ENCODE measurements at regions of chrX and their contacts with region 1.

Region 1: DNA sequence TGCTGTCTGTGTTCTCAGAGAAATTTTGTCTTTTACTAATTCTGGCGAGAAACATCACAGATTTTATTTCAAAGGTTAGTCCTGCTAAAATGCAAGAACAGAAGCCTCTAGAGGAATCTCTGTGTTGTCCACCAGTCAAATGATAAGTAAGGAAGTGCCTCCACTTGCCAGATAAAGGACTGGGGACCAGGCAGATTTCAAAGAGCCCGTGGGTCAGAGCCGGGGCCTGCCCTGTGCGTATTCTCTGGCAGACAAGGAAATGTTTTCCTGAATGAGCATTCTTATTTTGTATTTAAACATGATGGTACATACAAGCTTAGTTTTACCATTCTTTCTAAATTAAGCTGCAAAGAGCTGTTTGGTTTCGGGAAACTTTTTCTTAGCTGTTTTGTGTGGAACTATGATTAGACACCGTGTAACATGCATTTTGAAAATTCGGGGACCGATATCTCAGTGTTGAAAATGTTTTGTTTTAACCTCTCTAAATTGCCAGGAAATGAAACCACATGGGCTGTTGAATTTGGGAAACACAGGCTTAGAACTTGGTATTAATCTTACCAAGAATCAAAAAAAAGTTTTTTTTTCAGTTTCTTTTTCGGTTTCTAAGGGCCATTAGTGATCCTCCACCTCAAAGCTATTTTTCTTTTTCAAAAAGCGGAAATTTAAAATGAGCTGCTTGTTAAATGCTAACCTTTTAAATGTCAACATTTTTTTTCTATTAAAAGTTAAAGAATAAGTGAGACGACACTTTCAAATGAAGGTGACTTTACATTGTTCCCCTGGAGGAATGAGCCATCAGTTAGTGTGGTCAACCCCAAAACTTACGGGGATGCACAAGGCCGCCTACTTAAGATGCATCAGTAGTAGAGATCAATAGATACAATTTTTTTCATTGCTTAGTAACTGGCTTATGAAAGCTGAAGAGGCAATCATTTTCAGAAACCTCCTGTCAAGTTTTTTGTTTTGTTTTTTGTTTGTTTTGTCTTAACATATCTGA is 89.6 kb upstream of the MTM1 start:
- DNase-seq: no peak
- ATAC-seq: no peak
- H3K4me3 ChIP-seq: peak overlapping the region in 2 of 10 donors; percentile 1 to 14
- H3K27ac ChIP-seq: peak overlapping the region in 2 of 10 donors; percentile 22 to 66
- H3K4me1 ChIP-seq: peaks cover 0 to 15% (median 0%) of the 10 kb centered on the region in 9 donors
- H3K27me3 ChIP-seq: peaks cover 0 to 14% (median 0%) of the 10 kb centered on the region in 7 donors
- CTCF ChIP-seq: no peak

Region 2: DNA sequence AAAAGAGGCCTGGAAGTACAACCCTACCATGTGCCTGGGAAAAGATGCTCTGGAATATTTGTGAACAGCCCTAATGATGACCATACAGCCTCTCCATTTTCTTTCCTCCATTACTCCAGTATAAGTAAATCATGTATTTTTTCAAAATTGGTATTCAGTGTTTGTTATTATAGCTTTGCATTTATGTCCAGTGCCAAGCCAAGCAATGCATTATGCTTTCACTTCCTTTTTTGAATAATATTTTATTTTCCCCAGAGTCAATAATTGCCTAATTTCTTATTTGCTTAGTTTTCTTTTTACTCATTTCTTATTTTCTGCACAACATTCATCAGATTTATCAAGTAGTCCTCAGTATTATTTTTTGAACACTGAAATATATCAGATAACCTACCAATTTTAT is 491.2 kb before region 1 on chrX:
- intact Hi-C with region 1: loop called in 1 of 10 experiments (anchors 10 kb)
- DNase-seq: no peak
- ATAC-seq: no peak
- H3K4me3 ChIP-seq: no peak overlapping the region
- H3K27ac ChIP-seq: no peak overlapping the region
- H3K4me1 ChIP-seq: peaks cover 0 to 6% (median 0%) of the 10 kb centered on the region in 9 donors
- H3K27me3 ChIP-seq: no peaks in the 10 kb centered on the region
- CTCF ChIP-seq: no peak

Region 3: DNA sequence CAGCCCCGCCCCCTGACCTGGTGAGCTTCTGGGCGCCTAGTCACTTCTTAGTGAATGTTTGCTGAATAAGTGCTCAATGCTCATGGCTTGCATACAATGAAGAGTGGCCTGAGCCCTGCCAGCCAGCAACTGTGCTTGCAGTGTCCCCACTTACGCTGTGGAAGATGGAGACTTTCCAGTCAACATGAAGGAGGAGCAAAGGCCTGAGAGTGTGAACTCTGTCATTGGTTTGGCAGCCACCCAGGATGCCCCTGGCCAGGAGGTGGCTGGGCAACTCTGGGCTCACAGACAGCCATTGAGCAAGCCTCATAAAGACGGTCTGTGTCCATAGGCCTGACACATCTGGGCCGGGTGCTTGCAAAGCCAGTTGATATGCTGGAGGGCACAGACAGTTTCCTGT is 187.8 kb before region 1 on chrX:
- intact Hi-C with region 1: no loop called
- DNase-seq: no peak
- ATAC-seq: no peak
- H3K4me3 ChIP-seq: no peak overlapping the region
- H3K27ac ChIP-seq: no peak overlapping the region
- H3K4me1 ChIP-seq: no peaks in the 10 kb centered on the region
- H3K27me3 ChIP-seq: no peaks in the 10 kb centered on the region
- CTCF ChIP-seq: no peak